Right ventricle myocardium inferior (tissue), 1 donor: ENCODE measurements at regions of chr12 and their contacts with region 1.

Region 1: GRCh38 chr12:65556681-65557437 is 267.4 kb upstream of the HMGA2 start:
- DNase-seq: peak; percentile 89
- ATAC-seq: peak; percentile 95

Region 2: DNA sequence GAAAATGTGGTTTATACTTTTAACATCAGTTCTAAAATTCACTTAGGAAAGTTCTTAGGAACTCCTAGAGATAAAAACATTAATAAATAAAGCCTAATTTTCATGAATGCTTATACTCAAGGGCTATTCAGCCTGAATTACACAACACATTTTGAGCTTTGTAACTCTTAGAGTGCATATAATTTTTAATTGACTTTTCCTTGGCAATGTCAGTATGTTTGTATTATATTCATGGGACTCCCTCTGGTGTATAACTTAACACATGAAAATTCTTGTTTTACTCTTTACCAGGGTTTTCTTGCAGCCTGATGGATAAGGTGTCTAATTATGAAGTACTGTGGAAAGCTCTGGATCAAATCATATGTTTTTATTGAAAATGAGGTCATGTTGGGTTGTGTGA is 116.9 kb after region 1 on chr12:
- intact Hi-C with region 1: loop called (anchors 10 kb)
- DNase-seq: no peak
- ATAC-seq: no peak

Region 3: GRCh38 chr12:65986047-65986446 is 429.2 kb after region 1 on chr12:
- intact Hi-C with region 1: loop called (anchors 5 kb)
- DNase-seq: no peak
- ATAC-seq: no peak

Region 4: DNA sequence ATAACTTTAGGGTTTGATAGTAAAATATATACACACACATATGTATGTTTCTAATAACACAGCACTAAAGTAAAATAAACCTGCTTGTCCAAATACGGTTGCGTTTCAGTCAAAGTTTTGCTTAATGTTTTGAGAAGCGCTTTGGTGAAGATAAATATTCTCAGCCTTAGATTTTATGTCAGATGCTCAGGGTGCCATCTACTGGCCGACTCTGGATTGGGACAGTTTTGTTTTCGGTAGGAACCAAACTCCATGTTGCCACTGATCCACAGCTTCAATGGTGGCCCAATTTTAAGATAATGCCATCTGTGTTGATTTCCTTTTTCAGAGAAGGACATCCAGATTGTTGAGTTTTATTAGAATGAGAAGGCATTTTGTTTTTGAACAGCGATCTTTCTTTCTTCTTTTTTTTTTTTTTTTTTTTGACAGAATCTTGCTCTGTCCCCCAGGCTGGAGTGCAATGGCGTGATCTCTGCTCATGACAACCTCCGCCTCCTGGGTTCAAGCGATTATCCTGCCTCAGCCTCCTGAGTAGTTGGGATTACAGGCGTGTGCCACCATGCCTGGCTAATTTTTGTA is 530.6 kb after region 1 on chr12:
- intact Hi-C with region 1: loop called (anchors 5 kb)
- DNase-seq: no peak
- ATAC-seq: peak; percentile 59